ENCODE measurements at regions of chr3 and their contacts with region 1.

Region 1: DNA sequence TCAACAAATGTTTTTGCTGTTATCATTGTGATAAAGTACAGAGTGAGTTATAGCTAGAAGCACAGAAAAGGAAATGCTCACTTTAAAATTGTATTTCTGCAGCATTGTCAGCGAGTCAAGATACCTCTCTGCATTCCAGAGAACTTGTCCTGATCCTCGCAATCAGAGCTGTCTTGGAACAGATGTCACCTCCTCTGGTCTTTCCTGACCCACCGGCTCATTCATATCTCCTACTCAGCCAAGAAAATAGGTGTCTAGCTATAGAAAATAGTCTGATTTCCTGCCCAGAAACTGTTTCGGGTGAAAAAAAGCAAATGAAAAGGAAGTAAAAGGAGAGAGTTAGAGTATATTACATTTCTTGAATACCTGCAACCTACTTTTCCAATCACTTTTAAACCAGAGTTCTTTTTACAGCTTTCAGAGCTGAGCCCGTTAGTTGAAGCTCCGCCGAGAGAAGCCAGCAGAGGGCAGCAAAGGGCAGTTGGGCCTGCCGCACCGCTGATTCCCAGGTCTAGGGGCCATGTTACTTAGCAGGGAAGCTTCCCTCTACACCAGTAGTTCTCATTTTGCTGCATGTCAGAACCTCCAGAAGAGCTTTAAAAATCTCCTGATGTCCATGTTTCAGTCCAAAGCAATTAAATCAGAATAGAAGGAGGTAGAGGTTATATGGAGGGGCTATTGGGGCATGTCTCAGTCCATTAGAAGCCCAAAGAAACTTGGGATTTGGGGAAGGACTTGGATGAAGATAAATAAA is 185.7 kb upstream of the THRB start:
- DNase-seq: peak; percentile 85
- H3K4me3 Mint-ChIP-seq: no peak overlapping the region
- H3K27ac Mint-ChIP-seq: no peak overlapping the region
- H3K4me1 Mint-ChIP-seq: peaks cover 16% of the 10 kb centered on the region
- H3K27me3 Mint-ChIP-seq: peaks cover 53% of the 10 kb centered on the region

Region 2: DNA sequence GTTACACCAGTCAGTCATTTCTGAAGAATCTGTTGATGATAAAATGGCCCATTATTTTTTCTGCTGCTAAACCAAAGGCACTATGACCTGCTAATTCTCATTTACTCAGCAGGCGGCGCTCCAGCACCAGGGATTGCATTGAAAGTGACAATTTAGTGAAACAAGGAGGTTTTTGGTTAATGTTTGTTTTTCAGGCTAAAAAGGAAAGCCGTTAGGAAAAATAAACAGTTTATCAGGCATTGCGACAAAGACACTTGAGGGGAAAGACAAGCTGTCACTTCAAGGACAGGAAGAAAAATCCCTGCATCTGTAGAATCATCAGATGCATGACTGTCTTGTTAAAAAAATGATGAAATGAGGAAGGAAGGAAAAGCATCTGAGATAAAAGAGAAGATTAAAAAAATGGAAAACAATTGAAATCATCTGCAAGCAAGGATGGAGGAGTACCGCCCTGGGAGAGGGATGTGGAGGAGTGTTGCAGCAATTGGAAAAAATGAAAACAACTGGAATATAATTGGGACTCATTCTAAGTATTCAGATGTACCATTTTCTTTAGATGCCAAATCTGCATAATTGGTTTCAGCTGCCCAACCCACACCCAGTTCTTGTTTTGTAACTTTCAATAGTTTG is 681.3 kb before region 1 on chr3:
- intact Hi-C with region 1: loop called (anchors 5 kb)
- DNase-seq: peak; percentile 88
- H3K4me3 Mint-ChIP-seq: no peak overlapping the region
- H3K27ac Mint-ChIP-seq: no peak overlapping the region
- H3K4me1 Mint-ChIP-seq: peaks cover 4% of the 10 kb centered on the region
- H3K27me3 Mint-ChIP-seq: peaks cover 28% of the 10 kb centered on the region

Region 3: GRCh38 chr3:24185738-24186384 is 494.5 kb before region 1 on chr3:
- intact Hi-C with region 1: loop called (anchors 2 kb)
- DNase-seq: peak; percentile 59
- H3K4me3 Mint-ChIP-seq: no peak overlapping the region
- H3K27ac Mint-ChIP-seq: no peak overlapping the region
- H3K4me1 Mint-ChIP-seq: no peaks in the 10 kb centered on the region
- H3K27me3 Mint-ChIP-seq: peaks cover 4% of the 10 kb centered on the region

Region 4: GRCh38 chr3:24264748-24265158 is 415.6 kb before region 1 on chr3:
- intact Hi-C with region 1: loop called (anchors 5 kb)
- DNase-seq: peak; percentile 59
- H3K4me3 Mint-ChIP-seq: no peak overlapping the region
- H3K27ac Mint-ChIP-seq: no peak overlapping the region
- H3K4me1 Mint-ChIP-seq: no peaks in the 10 kb centered on the region
- H3K27me3 Mint-ChIP-seq: peaks cover 6% of the 10 kb centered on the region

Region 5: GRCh38 chr3:24494618-24495325 is 185.6 kb before region 1 on chr3 and contains the start of gene THRB:
- intact Hi-C with region 1: loop called (anchors 10 kb)
- DNase-seq: no peak
- H3K4me3 Mint-ChIP-seq: no peak within 1 kb of the TSS
- H3K27ac Mint-ChIP-seq: no peak within 1 kb of the TSS
- H3K4me1 Mint-ChIP-seq: no peaks in the 10 kb centered on the region
- H3K27me3 Mint-ChIP-seq: peaks cover 48% of the 10 kb centered on the region
- total RNA-seq, gene THRB: not detected in 2 replicates

Region 6: GRCh38 chr3:24639481-24640329 is 40.7 kb before region 1 on chr3:
- intact Hi-C with region 1: no loop called
- DNase-seq: no peak
- H3K4me3 Mint-ChIP-seq: no peak overlapping the region
- H3K27ac Mint-ChIP-seq: no peak overlapping the region
- H3K4me1 Mint-ChIP-seq: no peaks in the 10 kb centered on the region
- H3K27me3 Mint-ChIP-seq: no peaks in the 10 kb centered on the region

Region 7: DNA sequence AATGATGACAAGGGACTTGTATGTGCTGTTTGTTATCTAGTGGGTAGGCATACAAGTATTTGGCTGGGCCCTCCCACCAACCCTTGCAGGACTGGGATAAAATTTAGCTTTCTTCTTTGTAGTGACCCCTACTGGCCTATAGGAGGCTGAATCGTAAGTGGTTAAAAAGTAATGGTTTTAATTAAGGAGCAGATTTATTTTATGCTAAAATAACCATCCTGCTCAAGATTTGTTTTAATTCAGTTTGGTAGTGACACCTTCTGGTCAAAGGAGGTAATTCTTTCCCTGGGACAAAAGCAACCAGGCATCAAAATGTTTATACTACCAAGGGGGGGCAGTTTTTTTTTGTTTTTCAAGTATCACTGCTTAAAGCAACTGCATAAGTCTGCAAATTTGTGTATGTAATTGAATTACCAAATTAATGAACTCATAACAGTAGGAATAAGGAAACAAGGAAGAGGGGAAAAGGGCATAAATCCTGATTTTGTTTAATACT is 913.7 kb after region 1 on chr3:
- intact Hi-C with region 1: loop called (anchors 5 kb)
- DNase-seq: peak; percentile 70
- H3K4me3 Mint-ChIP-seq: no peak overlapping the region
- H3K27ac Mint-ChIP-seq: no peak overlapping the region
- H3K4me1 Mint-ChIP-seq: no peaks in the 10 kb centered on the region
- H3K27me3 Mint-ChIP-seq: no peaks in the 10 kb centered on the region

Measured in activated CD4-positive, alpha-beta T cell treated with anti-CD3 and anti-CD28 coated beads, Interleukin-2, amount 10 ng/mL, durations not matched to agents 24 days and 14 days (primary cell).